Activated CD4-positive, alpha-beta T cell treated with anti-CD3 and anti-CD28 coated beads for 36 hours (primary cell): ENCODE measurements at regions of chr18 and their contacts with region 1.

Region 1: DNA sequence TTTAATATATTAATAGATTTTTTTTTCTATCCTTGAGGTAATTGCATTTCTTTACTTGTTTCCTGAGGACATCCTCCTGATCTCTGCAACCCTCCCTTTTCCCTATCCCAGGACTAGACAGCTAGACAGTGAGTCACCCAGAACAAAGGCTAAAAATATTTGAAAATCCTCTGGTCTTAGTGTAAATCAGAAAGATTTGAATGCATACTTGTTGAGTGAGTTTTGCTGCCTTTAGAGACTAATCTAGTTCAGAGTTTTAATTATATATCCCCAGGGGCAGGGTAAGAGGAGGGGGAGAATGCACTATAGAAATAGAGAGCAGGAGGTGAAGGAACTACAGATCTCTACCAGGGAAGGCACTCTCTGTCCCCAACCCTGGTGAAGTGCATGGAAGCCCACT is 202.3 kb upstream of the TCF4 start:
- DNase-seq: no peak
- ATAC-seq: no peak
- H3K4me3 Mint-ChIP-seq: no peak overlapping the region
- H3K27ac Mint-ChIP-seq: no peak overlapping the region
- H3K4me1 Mint-ChIP-seq: no peaks in the 10 kb centered on the region
- H3K27me3 Mint-ChIP-seq: no peaks in the 10 kb centered on the region

Region 2: GRCh38 chr18:55694291-55694690 is 96.0 kb before region 1 on chr18:
- CTCF ChIA-PET with region 1: no interaction called
- POLR2A ChIA-PET with region 1: no interaction called
- intact Hi-C with region 1: no loop called
- DNase-seq: no peak
- ATAC-seq: no peak
- H3K4me3 Mint-ChIP-seq: no peak overlapping the region
- H3K27ac Mint-ChIP-seq: no peak overlapping the region
- H3K4me1 Mint-ChIP-seq: no peaks in the 10 kb centered on the region
- H3K27me3 Mint-ChIP-seq: no peaks in the 10 kb centered on the region

Region 3: GRCh38 chr18:55748227-55748738 is 42.0 kb before region 1 on chr18:
- CTCF ChIA-PET with region 1: no interaction called
- POLR2A ChIA-PET with region 1: no interaction called
- intact Hi-C with region 1: loop called in 1 of 2 experiments (anchors 10 kb)
- DNase-seq: no peak
- ATAC-seq: no peak
- H3K4me3 Mint-ChIP-seq: no peak overlapping the region
- H3K27ac Mint-ChIP-seq: no peak overlapping the region
- H3K4me1 Mint-ChIP-seq: no peaks in the 10 kb centered on the region
- H3K27me3 Mint-ChIP-seq: no peaks in the 10 kb centered on the region